PC-9 (cell line): ENCODE measurements at regions of chr13 and their contacts with region 1.

Region 1: GRCh38 chr13:50617134-50617721 is 226.3 kb downstream of the DLEU7 start:
- DNase-seq: peak in 1 of 2 experiments; percentile 73
- H3K4me3 ChIP-seq: no peak overlapping the region
- H3K27ac ChIP-seq: 0 out of 2 replicates have a peak overlapping the region, but pooled peaks have one; percentile 5
- H3K4me1 ChIP-seq: peaks cover 16% of the 10 kb centered on the region
- H3K27me3 ChIP-seq: no peaks in the 10 kb centered on the region
- CTCF ChIP-seq: no peak

Region 2: DNA sequence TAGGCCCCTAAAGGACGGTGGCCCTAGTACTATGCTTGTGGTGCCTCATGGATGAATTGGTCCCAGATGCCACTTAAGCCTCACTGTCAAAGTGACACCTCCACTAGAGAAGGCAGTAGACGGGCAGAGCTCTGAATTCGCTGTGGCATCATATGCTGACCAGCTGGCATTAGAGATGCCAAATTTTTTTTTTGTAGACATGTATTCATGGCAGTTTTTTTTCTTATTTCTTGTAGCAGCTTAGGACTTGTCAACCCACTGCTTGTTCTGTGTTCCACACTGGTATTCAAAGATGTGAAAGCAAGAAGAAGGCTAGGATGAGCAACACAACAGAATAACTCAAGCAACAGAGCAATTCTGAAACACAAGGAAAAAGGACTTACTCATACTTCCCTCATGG is 13.8 kb after region 1 on chr13:
- CTCF ChIA-PET with region 1: no interaction called
- POLR2A ChIA-PET with region 1: no interaction called
- intact Hi-C with region 1: loop called (anchors 2 kb)
- DNase-seq: no peak
- H3K4me3 ChIP-seq: no peak overlapping the region
- H3K27ac ChIP-seq: no peak overlapping the region
- H3K4me1 ChIP-seq: no peaks in the 10 kb centered on the region
- H3K27me3 ChIP-seq: no peaks in the 10 kb centered on the region
- CTCF ChIP-seq: no peak